ENCODE measurements at regions of chr1 and their contacts with region 1.

Region 1: DNA sequence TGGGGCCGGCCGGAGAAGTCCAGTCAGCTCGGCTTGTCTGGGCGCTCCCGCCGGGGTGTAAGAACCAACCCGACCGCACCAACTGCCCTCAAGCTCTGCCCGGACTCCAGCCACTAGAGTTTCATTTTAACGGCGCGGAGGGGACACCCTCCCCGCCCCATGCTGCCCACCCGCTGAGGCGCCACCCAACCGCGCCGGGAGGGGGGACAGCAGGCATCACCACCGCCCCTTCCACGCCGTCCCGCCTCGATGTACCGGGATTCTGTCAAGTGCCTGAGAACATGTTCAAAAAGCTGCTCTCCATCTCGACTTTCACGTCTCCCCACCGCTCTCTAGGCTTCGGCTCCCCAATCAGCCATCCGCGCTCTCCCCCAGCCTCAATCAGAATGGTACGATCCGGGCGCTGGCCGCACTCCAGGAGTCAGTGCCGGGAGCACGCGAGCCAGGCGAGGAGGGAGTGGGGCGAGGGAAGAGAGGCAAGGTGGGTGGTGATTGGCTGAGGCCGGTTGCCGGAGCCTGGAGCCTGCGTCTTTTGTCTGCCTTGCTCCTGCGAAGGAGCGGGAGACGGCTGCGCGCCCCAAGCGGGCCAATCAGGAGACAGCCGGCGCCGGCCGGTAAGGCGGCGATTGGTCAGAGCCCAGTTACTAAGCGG is at the start of gene PIK3R3:
- DNase-seq: peak; percentile 89
- H3K4me3 Mint-ChIP-seq: peak within 1 kb of the TSS; percentile 96
- H3K27ac Mint-ChIP-seq: peak within 1 kb of the TSS; percentile 98
- H3K4me1 Mint-ChIP-seq: peaks cover 42% of the 10 kb centered on the region
- H3K27me3 Mint-ChIP-seq: peaks cover 64% of the 10 kb centered on the region
- total RNA-seq, gene PIK3R3: 3.6 TPM in 2 replicates

Region 2: DNA sequence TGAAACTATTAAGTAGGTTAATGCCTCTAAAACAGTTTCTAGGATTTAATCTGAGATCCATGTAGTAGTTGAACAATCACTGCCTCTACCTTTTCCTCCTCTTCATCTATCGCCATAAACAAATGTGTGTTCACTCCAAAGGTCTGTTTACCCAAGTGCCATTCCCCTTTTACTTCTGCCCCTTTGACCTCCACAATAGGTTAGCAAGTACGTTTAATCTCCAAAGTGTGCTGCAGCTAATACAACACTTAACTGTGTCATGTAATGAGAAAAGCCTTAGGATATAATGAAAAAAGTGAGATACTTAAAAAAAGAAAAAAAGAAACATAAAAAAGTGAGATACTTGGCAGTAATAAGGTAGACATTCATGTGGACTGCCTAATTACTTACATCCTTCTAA is 474.5 kb before region 1 on chr1:
- intact Hi-C with region 1: no loop called
- DNase-seq: no peak
- H3K4me3 Mint-ChIP-seq: no peak overlapping the region
- H3K27ac Mint-ChIP-seq: no peak overlapping the region
- H3K4me1 Mint-ChIP-seq: peaks cover 12% of the 10 kb centered on the region
- H3K27me3 Mint-ChIP-seq: no peaks in the 10 kb centered on the region

Region 3: GRCh38 chr1:46062651-46063319 is 69.9 kb before region 1 on chr1:
- intact Hi-C with region 1: loop called (anchors 1 kb)
- DNase-seq: peak; percentile 54
- H3K4me3 Mint-ChIP-seq: no peak overlapping the region
- H3K27ac Mint-ChIP-seq: peak overlapping the region; percentile 24
- H3K4me1 Mint-ChIP-seq: peaks cover 34% of the 10 kb centered on the region
- H3K27me3 Mint-ChIP-seq: peaks cover 2% of the 10 kb centered on the region

Region 4: GRCh38 chr1:46179138-46180081 is 46.8 kb after region 1 on chr1:
- intact Hi-C with region 1: loop called (anchors 2 kb)
- DNase-seq: peak; percentile 40
- H3K4me3 Mint-ChIP-seq: no peak overlapping the region
- H3K27ac Mint-ChIP-seq: no peak overlapping the region
- H3K4me1 Mint-ChIP-seq: peaks cover 6% of the 10 kb centered on the region
- H3K27me3 Mint-ChIP-seq: peaks cover 9% of the 10 kb centered on the region

Region 5: DNA sequence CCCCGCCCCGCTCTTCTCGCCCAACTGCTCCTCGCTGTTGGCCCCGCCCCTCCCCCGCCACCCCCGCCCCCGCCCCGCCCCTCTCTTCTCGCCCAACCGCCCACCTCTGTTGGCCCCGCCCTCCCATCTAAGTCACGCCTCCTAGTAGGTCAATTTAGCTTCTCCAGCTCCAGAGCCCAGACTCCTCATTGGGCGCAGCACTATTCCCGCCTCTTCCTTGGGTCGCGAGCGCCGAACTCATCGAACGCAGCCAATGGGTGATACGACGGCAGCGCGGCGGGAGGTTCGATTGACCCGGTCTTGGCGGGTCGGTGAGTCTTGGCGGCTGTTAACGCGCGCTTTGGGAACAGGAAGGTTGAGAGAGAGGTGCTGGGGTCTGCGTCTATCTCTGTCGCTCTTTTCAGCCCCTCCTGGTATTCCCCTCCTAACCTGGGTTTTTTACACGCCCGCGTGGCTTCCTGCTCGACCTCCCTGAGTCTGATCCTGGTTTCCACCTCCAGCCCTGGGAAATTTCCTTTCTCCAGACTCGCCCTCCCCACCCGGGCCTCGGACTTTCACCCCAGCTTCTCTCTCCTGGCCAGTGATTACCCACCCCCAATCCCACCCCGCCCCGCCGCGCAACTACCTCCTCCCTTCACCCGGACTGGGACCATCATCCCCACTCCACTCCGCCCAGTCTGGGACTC is 114.9 kb after region 1 on chr1 and contains the start of gene RAD54L:
- intact Hi-C with region 1: loop called (anchors 1 kb)
- DNase-seq: peak; percentile 95
- H3K4me3 Mint-ChIP-seq: peak within 1 kb of the TSS; percentile 97
- H3K27ac Mint-ChIP-seq: peak within 1 kb of the TSS; percentile 94
- H3K4me1 Mint-ChIP-seq: peaks cover 39% of the 10 kb centered on the region
- H3K27me3 Mint-ChIP-seq: no peaks in the 10 kb centered on the region
- total RNA-seq, gene RAD54L: 49.7 and 50.2 TPM in 2 replicates